Gastrocnemius medialis (tissue), 4 donors: ENCODE measurements at regions of chr10 and their contacts with region 1.

Region 1: DNA sequence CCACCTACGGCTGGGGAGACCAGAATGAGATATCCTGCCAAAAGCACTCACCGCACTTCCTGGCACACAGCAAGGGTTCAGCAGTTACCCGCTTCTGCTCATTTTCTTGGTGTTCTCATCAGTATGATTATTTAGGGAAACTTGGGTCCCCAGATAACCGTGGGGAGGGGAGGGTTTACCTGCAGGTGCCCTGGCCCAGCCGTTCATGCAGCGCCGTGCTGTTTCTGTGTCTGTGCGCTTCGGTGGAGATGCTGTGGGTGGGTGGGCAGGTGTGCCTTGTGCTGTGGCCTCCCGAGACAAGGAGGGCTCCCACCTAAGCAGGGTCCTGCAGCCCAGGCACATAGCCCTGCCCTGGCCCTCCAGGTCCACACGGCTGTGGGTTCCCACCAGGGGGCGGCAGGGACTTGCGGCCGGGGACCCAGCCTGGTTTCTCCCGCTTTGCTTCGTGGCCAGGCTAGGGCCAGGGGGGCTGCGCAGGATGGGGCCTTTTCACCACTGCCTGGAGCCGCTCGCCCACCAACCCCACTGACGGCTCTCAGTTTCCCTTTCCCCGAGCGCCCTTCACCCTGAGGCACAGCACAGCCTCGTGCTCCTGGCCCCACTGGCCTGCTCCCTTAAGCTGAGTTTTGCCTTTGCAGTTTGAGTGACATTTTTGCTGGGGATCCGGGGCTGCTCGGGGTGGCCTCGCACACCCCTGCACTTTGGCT is 78.5 kb downstream of the LHPP start:
- DNase-seq: peak; percentile 42 to 64
- ATAC-seq: peak; percentile 75 to 82
- H3K4me3 ChIP-seq: peak overlapping the region in 3 of 4 donors; percentile 6 to 29 (median 29)
- H3K27ac ChIP-seq: peak overlapping the region in 1 of 4 donors; percentile 37
- H3K4me1 ChIP-seq: peaks cover 13 to 15% of the 10 kb centered on the region in 2 donors
- H3K27me3 ChIP-seq: no peaks in the 10 kb centered on the region
- CTCF ChIP-seq: peak; percentile 93 to 95 (median 94)
- POLR2A ChIP-seq: no peak

Region 2: GRCh38 chr10:124565565-124566256 is 25.6 kb after region 1 on chr10:
- in situ Hi-C with region 1: no loop called
- intact Hi-C with region 1: loop called (anchors 1 kb)
- DNase-seq: peak; percentile 84 to 97
- ATAC-seq: peak; percentile 81 to 83
- H3K4me3 ChIP-seq: peak overlapping the region in 2 of 4 donors; percentile 2 to 12
- H3K27ac ChIP-seq: peak overlapping the region; percentile 94 to 99 (median 95)
- H3K4me1 ChIP-seq: peaks cover 31 to 45% of the 10 kb centered on the region in 2 donors
- H3K27me3 ChIP-seq: no peaks in the 10 kb centered on the region
- CTCF ChIP-seq: peak; percentile 75 to 94 (median 87)
- POLR2A ChIP-seq: no peak

Region 3: DNA sequence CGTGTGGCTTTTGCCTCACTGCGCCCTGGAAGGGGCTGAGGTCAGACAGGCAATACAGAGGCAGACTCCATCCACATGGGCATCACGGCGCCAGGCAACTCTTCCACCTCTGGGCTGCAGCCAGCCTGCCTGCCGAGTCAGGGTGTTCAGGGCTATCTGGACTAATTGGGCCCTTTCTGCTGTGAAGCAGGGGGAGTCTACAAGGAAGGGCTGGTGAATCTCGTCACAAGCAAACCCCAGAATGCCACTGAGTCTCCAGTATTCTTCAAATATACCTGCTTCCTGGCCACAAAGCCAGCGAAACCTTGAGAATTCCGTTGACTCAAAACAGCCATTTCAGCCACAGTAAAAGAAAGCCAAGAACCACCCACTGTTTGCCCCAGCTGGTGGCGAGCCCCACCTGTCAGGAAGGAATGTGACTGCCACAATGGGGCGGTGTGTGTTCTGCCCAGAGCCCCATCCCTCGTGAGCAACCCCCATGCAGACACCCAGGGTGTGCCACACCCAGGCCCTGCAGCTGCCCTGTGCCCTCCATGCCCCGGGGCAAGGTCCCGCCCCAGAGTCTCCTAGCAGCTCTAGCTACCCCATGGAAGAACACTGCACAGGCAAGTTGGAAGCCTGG is 86.8 kb after region 1 on chr10:
- in situ Hi-C with region 1: no loop called
- intact Hi-C with region 1: loop called (anchors 5 kb)
- DNase-seq: no peak
- ATAC-seq: no peak
- H3K4me3 ChIP-seq: no peak overlapping the region
- H3K27ac ChIP-seq: peak overlapping the region; percentile 65 to 88 (median 77)
- H3K4me1 ChIP-seq: peaks cover 88 to 91% of the 10 kb centered on the region in 2 donors
- H3K27me3 ChIP-seq: no peaks in the 10 kb centered on the region
- CTCF ChIP-seq: no peak
- POLR2A ChIP-seq: no peak

Region 4: DNA sequence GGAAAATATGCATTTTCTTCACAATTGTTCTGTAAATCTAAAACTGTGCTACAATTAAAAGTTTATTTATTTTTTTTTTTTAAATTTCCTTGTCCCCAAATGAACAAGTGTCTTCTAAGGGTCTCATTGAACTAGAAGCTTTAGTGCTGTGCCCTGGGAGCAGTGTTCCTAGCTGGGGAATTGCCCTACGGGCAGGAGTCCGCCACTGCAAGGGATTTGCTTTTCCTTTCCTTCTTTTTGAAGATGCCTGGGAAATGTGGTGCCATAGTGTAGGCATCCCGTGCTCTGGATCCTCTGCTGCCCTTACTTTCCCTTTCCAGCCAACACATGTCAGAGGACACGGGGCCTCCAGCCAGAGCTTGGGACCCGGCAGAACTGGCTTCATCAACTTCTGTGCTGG is 797.4 kb after region 1 on chr10:
- in situ Hi-C with region 1: no loop called
- intact Hi-C with region 1: no loop called
- DNase-seq: no peak
- ATAC-seq: no peak
- H3K4me3 ChIP-seq: no peak overlapping the region
- H3K27ac ChIP-seq: no peak overlapping the region
- H3K4me1 ChIP-seq: peaks cover 0 to 8% of the 10 kb centered on the region in 2 donors
- H3K27me3 ChIP-seq: no peaks in the 10 kb centered on the region
- CTCF ChIP-seq: no peak
- POLR2A ChIP-seq: no peak